ENCODE measurements at regions of chr20 and their contacts with region 1.

Region 1: DNA sequence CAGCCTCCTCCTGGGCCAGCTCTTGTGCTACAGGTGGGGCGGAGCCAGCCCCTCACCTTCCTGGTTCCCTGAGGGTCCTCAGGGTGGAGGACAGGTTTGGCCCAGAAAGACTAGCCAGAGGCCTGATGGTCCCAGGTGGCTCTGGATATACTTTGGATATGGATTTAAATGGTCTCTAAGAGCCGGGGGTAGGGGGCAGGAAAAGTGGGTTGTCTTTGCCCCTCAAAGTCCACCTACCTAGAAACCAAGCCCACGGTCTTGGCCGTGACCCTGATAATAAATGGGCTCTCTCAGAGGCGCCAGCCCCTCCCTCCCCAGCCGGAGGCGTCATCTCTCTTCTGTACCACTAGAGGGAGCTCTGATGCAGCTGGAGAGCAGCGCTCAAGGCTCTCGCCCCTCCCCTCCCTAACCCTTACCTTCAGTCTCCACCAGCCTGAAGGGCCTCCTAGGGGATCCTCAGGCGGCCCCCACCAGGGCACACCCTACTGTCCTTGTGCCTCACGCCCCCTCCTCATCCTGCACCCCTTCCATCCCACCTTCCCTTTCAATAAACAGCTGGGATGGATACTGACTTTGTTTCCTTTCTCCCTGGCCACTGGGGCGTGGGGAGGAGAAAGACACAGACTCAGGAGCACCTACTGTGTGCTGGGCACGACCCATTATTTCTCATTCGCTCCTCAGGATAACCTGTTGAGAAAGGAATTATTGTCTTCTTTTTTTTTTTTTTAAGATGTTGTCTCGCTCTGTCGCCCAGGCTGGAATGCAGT is 7.6 kb downstream of the NRSN2 start:
- DNase-seq: peak; percentile 84
- ATAC-seq: peak; percentile 94 to 96
- H3K4me3 ChIP-seq: no peak overlapping the region
- H3K27ac ChIP-seq: no peak overlapping the region
- H3K4me1 ChIP-seq: peaks cover 9% of the 10 kb centered on the region
- H3K27me3 ChIP-seq: no peaks in the 10 kb centered on the region
- CTCF ChIP-seq: peak; percentile 97

Region 2: DNA sequence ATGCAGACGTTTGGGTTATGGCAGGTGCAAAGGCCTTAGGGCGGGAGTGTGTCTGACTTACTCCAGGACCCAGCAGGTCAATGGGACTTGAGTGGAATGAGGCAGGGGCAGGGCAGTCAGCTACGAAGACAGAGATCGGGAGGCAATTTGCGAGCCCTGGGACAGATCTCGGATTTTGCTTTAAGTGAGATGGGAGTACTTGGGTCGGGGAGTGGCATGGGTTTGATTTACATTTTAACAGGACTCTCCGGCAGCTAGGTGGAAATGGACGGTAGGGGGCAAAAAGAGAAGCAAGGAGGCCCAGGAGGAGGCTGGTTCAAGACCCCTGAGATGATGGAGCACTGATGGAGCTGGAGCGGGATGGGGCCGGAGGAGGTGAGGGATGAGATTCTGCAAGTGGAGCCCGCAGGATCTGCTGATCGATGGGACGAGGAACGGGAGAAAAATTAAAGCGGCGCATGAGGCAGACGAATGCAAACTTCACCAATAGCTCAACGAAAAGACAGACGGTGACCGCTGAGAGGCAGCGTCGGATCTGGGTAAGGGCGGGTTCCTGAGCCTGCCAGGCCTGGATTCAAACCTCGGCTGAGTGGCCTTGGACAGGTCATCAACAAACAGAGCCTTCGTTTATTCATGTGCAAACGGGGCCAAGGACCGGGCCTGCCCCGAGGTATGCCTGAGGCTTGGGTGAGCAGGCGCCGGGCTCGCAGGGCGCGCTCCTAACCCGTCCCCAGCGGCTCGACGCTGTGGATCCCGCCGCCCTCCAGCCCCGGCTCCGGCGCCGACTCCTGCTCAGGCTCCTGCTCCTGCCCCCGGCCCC is 52.9 kb after region 1 on chr20:
- intact Hi-C with region 1: loop called (anchors 10 kb)
- DNase-seq: peak; percentile 86
- ATAC-seq: peak; percentile 75 to 80
- H3K4me3 ChIP-seq: peak overlapping the region; percentile 93
- H3K27ac ChIP-seq: peak overlapping the region; percentile 90
- H3K4me1 ChIP-seq: peaks cover 25% of the 10 kb centered on the region
- H3K27me3 ChIP-seq: no peaks in the 10 kb centered on the region
- CTCF ChIP-seq: peak; percentile 4

Region 3: DNA sequence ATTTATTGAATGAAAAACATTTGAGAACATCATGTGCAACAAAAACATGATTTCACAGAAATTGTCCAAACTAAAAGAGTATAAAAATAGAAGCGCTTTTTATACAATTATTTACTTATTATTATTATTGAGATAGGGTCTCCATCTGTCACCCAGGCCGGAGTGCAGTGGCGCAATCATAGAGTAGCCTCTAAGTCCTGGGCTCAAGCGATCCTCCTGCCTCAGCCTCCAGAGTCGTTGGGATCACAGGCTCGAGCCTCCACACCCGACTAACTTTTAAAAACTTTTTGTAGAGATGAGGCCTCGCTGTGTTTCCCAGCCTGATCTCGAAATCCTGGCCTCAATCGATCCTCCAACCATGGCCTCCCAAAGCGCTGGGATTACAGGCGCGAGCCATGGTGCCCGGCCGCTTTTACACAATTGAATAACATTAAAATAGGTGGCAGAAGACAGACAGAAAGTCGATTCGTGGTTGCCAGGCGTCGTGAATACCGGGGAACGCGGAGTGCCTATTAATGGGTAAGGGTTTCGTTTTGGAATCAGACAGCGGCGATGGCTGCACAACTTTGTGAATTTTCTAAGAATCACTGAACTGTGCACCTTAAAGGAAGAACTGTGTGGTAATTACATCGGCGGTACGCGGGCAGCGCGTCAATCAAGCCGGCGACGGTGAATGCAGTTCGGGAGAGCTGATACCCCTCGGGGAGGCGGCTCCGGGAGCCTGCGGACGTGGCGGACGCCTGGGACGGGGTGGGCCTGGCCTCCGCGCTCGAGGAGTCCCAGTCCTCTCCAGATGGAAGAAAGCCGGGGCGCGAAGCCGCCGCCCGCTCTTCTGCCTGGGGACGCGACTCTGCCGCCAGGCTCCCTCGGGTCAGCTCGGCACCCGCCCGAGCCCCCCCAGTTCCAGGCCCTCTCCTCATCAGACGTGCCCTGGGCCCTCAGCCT is 107.0 kb after region 1 on chr20:
- intact Hi-C with region 1: no loop called
- DNase-seq: peak; percentile 75
- ATAC-seq: peak; percentile 75 to 79
- H3K4me3 ChIP-seq: peak overlapping the region; percentile 86
- H3K27ac ChIP-seq: peak overlapping the region; percentile 90
- H3K4me1 ChIP-seq: peaks cover 52% of the 10 kb centered on the region
- H3K27me3 ChIP-seq: no peaks in the 10 kb centered on the region
- CTCF ChIP-seq: no peak

Region 4: DNA sequence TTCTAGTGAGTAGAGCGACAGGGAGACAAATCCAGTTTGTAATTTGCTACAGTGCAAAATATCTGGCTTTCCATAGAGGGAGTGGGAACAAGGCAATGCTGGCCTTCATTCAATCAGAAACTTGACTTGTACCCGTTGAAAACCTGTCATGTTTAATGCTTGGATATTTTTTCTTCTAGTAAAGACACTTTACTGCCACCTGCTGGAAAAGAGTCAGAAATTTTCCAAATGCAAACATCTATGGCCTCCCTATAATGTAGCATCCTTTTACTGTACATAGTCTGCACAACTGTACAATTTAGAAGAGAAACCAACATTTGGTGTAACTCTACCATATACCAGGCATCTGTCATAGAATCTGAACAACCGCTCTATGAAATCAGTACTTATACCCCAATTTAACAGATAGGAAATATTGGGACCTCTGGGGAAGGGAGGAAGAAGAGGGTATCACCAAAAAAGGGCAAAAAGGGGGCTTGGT is 124.5 kb after region 1 on chr20:
- intact Hi-C with region 1: loop called (anchors 10 kb)
- DNase-seq: no peak
- ATAC-seq: peak; percentile 54 to 74
- H3K4me3 ChIP-seq: no peak overlapping the region
- H3K27ac ChIP-seq: no peak overlapping the region
- H3K4me1 ChIP-seq: no peaks in the 10 kb centered on the region
- H3K27me3 ChIP-seq: no peaks in the 10 kb centered on the region
- CTCF ChIP-seq: peak; percentile 65

Measured in lower lobe of right lung (tissue), 2 donors.